ENCODE measurements at regions of chrX and their contacts with region 1.

Region 1: GRCh38 chrX:63930140-63930539 is 145.1 kb upstream of the ARHGEF9 start:
- DNase-seq: peak in 1 of 2 experiments; percentile 7
- H3K4me3 ChIP-seq: no peak overlapping the region
- H3K27ac ChIP-seq: no peak overlapping the region
- H3K4me1 ChIP-seq: peaks cover 0 to 6% (median 0%) of the 10 kb centered on the region in 4 experiments; a peak in 2 of 7 replicates
- H3K27me3 ChIP-seq: no peaks in the 10 kb centered on the region
- CTCF ChIP-seq: peak; percentile 27 to 68 (median 61)
- EP300 ChIP-seq: no peak
- POLR2A ChIP-seq: no peak
- RAD21 ChIP-seq: peak; percentile 85 to 88

Region 2: DNA sequence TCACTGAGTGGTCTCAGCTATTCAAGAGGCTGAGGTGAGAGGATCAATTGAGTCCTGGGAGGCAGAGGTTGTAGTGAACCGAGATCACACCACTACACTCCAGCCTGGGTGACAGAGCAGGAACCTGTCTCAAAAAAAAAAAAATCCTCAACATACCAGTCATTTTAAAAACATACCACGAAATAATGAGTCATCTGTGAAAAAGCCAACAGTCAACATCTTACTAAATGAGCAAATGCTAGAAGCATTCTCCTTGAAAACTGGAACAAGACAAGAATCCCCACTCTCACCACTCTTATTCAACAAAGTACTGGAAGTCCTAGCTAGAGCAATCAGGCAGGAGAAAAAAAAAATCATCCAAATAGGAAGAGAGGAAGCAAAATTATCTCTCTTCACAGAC is 41.1 kb before region 1 on chrX:
- CTCF ChIA-PET with region 1: no interaction called
- POLR2A ChIA-PET with region 1: no interaction called
- DNase-seq: no peak
- H3K4me3 ChIP-seq: no peak overlapping the region
- H3K27ac ChIP-seq: no peak overlapping the region
- H3K4me1 ChIP-seq: no peaks in the 10 kb centered on the region
- H3K27me3 ChIP-seq: no peaks in the 10 kb centered on the region
- CTCF ChIP-seq: no peak
- EP300 ChIP-seq: no peak
- POLR2A ChIP-seq: no peak
- RAD21 ChIP-seq: no peak

Region 3: GRCh38 chrX:63918611-63919010 is 11.5 kb before region 1 on chrX:
- CTCF ChIA-PET with region 1: interaction called, 11 read pairs
- POLR2A ChIA-PET with region 1: no interaction called
- DNase-seq: no peak
- H3K4me3 ChIP-seq: no peak overlapping the region
- H3K27ac ChIP-seq: no peak overlapping the region
- H3K4me1 ChIP-seq: no peaks in the 10 kb centered on the region
- H3K27me3 ChIP-seq: no peaks in the 10 kb centered on the region
- CTCF ChIP-seq: peak in 2 of 3 experiments; percentile 18 to 36; a peak in 1 of 4 replicates
- EP300 ChIP-seq: no peak
- POLR2A ChIP-seq: no peak
- RAD21 ChIP-seq: peak; percentile 42 to 55

Region 4: DNA sequence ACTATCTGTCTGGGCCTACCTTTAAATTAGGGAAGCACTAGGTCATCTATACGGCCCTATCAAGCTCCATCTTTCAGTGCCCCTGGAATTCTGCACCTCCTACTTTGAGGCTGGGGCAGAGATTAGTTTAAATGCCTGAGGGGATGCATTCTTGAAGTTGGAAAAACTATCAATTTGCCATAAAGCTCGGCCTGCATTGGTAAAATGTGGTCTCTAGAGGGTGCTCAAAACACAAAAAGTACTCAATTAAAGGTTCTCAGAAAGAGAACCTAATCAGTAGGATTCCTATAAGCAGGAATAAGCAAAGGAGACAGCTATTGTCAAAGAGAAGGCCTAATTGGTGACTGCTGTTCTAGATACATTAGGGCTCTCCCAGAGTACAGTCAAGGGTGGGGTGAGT is 163.6 kb after region 1 on chrX:
- CTCF ChIA-PET with region 1: interaction called, 13 read pairs
- POLR2A ChIA-PET with region 1: no interaction called
- DNase-seq: no peak
- H3K4me3 ChIP-seq: no peak overlapping the region
- H3K27ac ChIP-seq: no peak overlapping the region
- H3K4me1 ChIP-seq: no peaks in the 10 kb centered on the region
- H3K27me3 ChIP-seq: no peaks in the 10 kb centered on the region
- CTCF ChIP-seq: peak in 2 of 3 experiments; percentile 29 to 48; a peak in 2 of 4 replicates
- EP300 ChIP-seq: no peak
- POLR2A ChIP-seq: no peak
- RAD21 ChIP-seq: peak; percentile 63 to 64

Measured in H1 (cell line).